SK-N-SH (cell line): ENCODE measurements at regions of chr11 and their contacts with region 1.

Region 1: GRCh38 chr11:8263769-8264410 is at the start of gene LMO1:
- DNase-seq: peak; percentile 94
- H3K4me3 ChIP-seq: peak within 1 kb of the TSS; percentile 54 to 59
- H3K27ac ChIP-seq: peak within 1 kb of the TSS in 1 of 2 experiments; percentile 97; a peak in 2 of 4 replicates
- H3K4me1 ChIP-seq: peaks cover 5 to 69% of the 10 kb centered on the region in 2 experiments; a peak in 2 of 4 replicates
- H3K27me3 ChIP-seq: peaks cover 47% of the 10 kb centered on the region
- CTCF ChIP-seq: peak; percentile 88
- EP300 ChIP-seq: peak in 1 of 2 experiments; percentile 53; a peak in 2 of 4 replicates
- RAD21 ChIP-seq: peak; percentile 93
- polyA plus RNA-seq, gene LMO1: 0.12 and 0.62 TPM in 2 replicates

Region 2: DNA sequence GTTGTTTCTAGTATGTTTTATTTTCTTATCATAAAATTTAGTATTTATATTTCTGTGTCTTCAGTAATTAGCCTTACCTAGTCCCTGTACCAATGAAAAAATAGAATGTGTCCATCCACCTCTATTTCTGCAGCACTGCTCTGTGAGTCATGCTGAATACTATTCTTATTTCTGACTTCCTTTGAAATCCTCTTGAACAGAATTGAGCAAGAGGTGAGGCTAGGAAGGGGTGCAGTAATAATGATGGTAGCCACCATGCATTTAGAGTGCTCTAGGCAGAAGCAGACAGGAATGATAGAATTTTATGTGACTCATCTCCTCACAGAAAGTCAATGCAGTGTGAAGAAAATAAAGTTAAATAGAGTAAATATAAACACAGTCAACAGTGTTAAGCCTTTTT is 392.8 kb before region 1 on chr11:
- CTCF ChIA-PET with region 1: no interaction called
- POLR2A ChIA-PET with region 1: no interaction called
- DNase-seq: no peak
- H3K4me3 ChIP-seq: no peak overlapping the region
- H3K27ac ChIP-seq: no peak overlapping the region
- H3K4me1 ChIP-seq: no peaks in the 10 kb centered on the region
- H3K27me3 ChIP-seq: no peaks in the 10 kb centered on the region
- CTCF ChIP-seq: no peak
- EP300 ChIP-seq: no peak
- RAD21 ChIP-seq: no peak

Region 3: DNA sequence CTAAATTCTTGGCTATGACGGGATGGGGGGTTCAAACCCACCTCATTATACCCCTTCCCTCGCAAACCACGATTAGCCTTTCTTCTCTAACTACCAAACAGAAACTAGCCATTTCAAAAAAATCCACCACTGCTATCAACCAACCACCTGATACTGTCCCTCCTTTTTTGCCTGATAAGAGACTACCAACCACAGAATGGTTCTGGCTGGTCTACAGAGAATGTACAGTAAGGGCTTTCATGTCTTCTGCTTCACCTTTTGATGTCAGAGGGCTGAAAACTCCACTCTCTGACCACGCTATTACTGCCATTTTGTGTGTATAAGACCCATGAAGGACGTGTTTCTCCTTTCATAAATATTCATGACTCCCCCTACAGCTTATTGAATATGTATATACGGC is 114.2 kb before region 1 on chr11:
- CTCF ChIA-PET with region 1: no interaction called
- POLR2A ChIA-PET with region 1: no interaction called
- DNase-seq: no peak
- H3K4me3 ChIP-seq: no peak overlapping the region
- H3K27ac ChIP-seq: no peak overlapping the region
- H3K4me1 ChIP-seq: no peaks in the 10 kb centered on the region
- H3K27me3 ChIP-seq: peaks cover 5% of the 10 kb centered on the region
- CTCF ChIP-seq: no peak
- EP300 ChIP-seq: no peak
- RAD21 ChIP-seq: no peak

Region 4: GRCh38 chr11:8192016-8192895 is 71.6 kb before region 1 on chr11:
- CTCF ChIA-PET with region 1: interaction called, 58 read pairs
- POLR2A ChIA-PET with region 1: interaction called, 8 read pairs
- DNase-seq: peak; percentile 91
- H3K4me3 ChIP-seq: peak overlapping the region in 1 of 2 experiments; percentile 9; a peak in 1 of 4 replicates
- H3K27ac ChIP-seq: no peak overlapping the region
- H3K4me1 ChIP-seq: peaks cover 0 to 12% of the 10 kb centered on the region in 2 experiments; a peak in 1 of 4 replicates
- H3K27me3 ChIP-seq: no peaks in the 10 kb centered on the region; the same call in 1 of the 2 replicates
- CTCF ChIP-seq: peak; percentile 81
- EP300 ChIP-seq: no peak
- RAD21 ChIP-seq: peak; percentile 97

Region 5: DNA sequence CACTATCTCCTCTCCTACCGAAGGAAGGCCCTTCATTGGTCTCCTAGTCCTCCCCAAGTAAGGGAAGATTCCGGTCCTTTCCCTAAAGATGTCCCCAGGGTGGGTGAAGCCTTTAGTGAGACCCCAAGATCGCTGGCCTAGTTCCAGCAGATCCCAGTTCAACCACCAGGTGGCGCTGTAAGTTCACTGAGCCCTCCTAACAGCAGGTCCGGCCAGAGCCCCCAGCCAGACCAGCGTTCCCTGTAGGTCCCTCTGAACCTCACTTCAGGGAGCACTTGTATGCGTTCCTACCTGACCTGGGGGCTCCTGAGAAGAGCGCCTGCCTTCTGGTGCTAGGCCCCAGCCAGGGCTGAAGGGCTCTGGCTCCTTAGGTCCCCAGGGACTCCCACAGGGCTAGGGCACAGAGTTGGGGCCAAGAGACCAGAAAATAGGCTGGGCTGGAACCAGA is 38.3 kb before region 1 on chr11:
- CTCF ChIA-PET with region 1: interaction called, 604 read pairs
- POLR2A ChIA-PET with region 1: interaction called, 19 read pairs
- DNase-seq: peak; percentile 94
- H3K4me3 ChIP-seq: no peak overlapping the region; a peak in 1 of 4 replicates
- H3K27ac ChIP-seq: peak overlapping the region in 1 of 2 experiments; percentile 74; a peak in 2 of 4 replicates
- H3K4me1 ChIP-seq: peaks cover 0 to 66% of the 10 kb centered on the region in 2 experiments; a peak in 2 of 4 replicates
- H3K27me3 ChIP-seq: no peaks in the 10 kb centered on the region
- CTCF ChIP-seq: peak; percentile 96
- EP300 ChIP-seq: no peak
- RAD21 ChIP-seq: peak; percentile 97

Region 6: GRCh38 chr11:8277691-8278090 is 13.8 kb after region 1 on chr11:
- CTCF ChIA-PET with region 1: interaction called, 24 read pairs
- POLR2A ChIA-PET with region 1: interaction called, 10 read pairs
- DNase-seq: no peak
- H3K4me3 ChIP-seq: no peak overlapping the region
- H3K27ac ChIP-seq: no peak overlapping the region
- H3K4me1 ChIP-seq: peaks cover 0 to 6% of the 10 kb centered on the region in 2 experiments; a peak in 2 of 4 replicates
- H3K27me3 ChIP-seq: no peaks in the 10 kb centered on the region; the same call in 1 of the 2 replicates
- CTCF ChIP-seq: no peak
- EP300 ChIP-seq: no peak
- RAD21 ChIP-seq: no peak

Region 7: GRCh38 chr11:8318336-8318935 is 54.5 kb after region 1 on chr11:
- CTCF ChIA-PET with region 1: interaction called, 16 read pairs
- POLR2A ChIA-PET with region 1: no interaction called
- DNase-seq: no peak
- H3K4me3 ChIP-seq: no peak overlapping the region
- H3K27ac ChIP-seq: no peak overlapping the region
- H3K4me1 ChIP-seq: peaks cover 0 to 13% of the 10 kb centered on the region in 2 experiments; a peak in 2 of 4 replicates
- H3K27me3 ChIP-seq: 0 out of 2 replicates have a peak, but pooled peaks cover 4% of the 10 kb centered on the region
- CTCF ChIP-seq: no peak; the same call in 1 of the 2 replicates
- EP300 ChIP-seq: no peak
- RAD21 ChIP-seq: peak; percentile 43

Region 8: GRCh38 chr11:8354622-8355415 is 90.9 kb after region 1 on chr11:
- CTCF ChIA-PET with region 1: interaction called, 20 read pairs
- POLR2A ChIA-PET with region 1: interaction called, 5 read pairs
- DNase-seq: peak; percentile 79
- H3K4me3 ChIP-seq: peak overlapping the region in 1 of 2 experiments; percentile 24; a peak in 3 of 4 replicates
- H3K27ac ChIP-seq: peak overlapping the region in 1 of 2 experiments; percentile 91; a peak in 2 of 4 replicates
- H3K4me1 ChIP-seq: peaks cover 0 to 48% of the 10 kb centered on the region in 2 experiments; a peak in 1 of 4 replicates
- H3K27me3 ChIP-seq: no peaks in the 10 kb centered on the region; the same call in 1 of the 2 replicates
- CTCF ChIP-seq: no peak
- EP300 ChIP-seq: no peak
- RAD21 ChIP-seq: peak; percentile 44; the same call in 1 of the 2 replicates